CD8-positive, alpha-beta T cell (primary cell): ENCODE measurements at regions of chr12 and their contacts with region 1.

Region 1: DNA sequence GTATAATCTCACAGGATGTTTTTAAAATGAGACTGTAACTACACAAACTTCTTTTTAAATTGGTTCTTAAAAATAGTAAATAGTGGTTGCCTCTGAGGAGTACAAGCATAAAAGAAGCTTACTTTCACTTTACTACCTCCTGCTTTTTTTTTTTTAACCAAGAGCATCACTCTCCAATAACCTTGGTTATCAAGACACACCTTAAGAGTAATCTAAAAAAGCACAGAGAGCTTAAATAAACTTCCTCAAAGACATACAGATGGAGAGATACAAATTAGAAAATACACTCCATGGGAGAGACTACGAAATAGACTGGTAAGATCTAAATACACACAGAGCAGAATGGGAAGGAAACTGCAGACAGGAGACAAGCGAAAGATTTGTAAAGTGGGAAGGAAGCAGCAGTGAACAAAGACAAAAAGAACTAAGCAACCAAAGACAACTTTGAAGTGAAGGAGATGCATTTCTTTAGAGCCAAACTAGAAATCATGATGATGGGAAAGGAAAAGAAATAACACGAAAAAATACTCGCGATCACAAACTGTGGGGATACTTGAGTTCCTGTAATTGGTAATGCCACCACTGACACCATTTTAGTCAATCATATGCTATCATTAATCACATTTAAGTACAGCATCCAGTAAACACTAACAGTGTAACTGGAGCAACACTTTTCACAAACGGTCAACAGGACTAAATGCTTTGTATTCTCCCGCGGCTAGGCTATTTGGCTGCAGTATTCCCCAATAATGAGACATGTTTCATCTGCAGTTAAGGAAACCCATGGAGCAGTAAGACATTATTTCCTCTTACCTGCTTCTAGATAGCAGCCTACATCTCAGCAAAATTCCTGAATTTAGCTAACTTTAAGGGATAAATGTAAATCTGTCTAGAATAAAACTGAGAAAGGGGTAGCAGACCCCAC is 8.2 kb downstream of the SINHCAF start:
- DNase-seq: peak in 2 of 9 experiments; percentile 14 to 47
- ATAC-seq: peak; percentile 78
- H3K4me3 ChIP-seq: peak overlapping the region; percentile 36 to 45
- H3K4me3 Mint-ChIP-seq: peak overlapping the region; percentile 84
- H3K27ac ChIP-seq: peak overlapping the region; percentile 44 to 73
- H3K27ac Mint-ChIP-seq: peak overlapping the region; percentile 87
- H3K4me1 ChIP-seq: peaks cover 65% of the 10 kb centered on the region
- H3K4me1 Mint-ChIP-seq: peaks cover 75% of the 10 kb centered on the region
- H3K27me3 ChIP-seq: no peaks in the 10 kb centered on the region
- H3K27me3 Mint-ChIP-seq: no peaks in the 10 kb centered on the region
- CTCF ChIP-seq: no peak

Region 2: GRCh38 chr12:31201382-31201781 is 116.4 kb before region 1 on chr12:
- CTCF ChIA-PET with region 1: no interaction called
- POLR2A ChIA-PET with region 1: no interaction called
- intact Hi-C with region 1: no loop called
- DNase-seq: no peak
- ATAC-seq: no peak
- H3K4me3 ChIP-seq: no peak overlapping the region
- H3K4me3 Mint-ChIP-seq: no peak overlapping the region
- H3K27ac ChIP-seq: no peak overlapping the region
- H3K27ac Mint-ChIP-seq: no peak overlapping the region
- H3K4me1 ChIP-seq: no peaks in the 10 kb centered on the region
- H3K4me1 Mint-ChIP-seq: peaks cover 9% of the 10 kb centered on the region
- H3K27me3 ChIP-seq: no peaks in the 10 kb centered on the region
- H3K27me3 Mint-ChIP-seq: peaks cover 19% of the 10 kb centered on the region
- CTCF ChIP-seq: no peak

Region 3: DNA sequence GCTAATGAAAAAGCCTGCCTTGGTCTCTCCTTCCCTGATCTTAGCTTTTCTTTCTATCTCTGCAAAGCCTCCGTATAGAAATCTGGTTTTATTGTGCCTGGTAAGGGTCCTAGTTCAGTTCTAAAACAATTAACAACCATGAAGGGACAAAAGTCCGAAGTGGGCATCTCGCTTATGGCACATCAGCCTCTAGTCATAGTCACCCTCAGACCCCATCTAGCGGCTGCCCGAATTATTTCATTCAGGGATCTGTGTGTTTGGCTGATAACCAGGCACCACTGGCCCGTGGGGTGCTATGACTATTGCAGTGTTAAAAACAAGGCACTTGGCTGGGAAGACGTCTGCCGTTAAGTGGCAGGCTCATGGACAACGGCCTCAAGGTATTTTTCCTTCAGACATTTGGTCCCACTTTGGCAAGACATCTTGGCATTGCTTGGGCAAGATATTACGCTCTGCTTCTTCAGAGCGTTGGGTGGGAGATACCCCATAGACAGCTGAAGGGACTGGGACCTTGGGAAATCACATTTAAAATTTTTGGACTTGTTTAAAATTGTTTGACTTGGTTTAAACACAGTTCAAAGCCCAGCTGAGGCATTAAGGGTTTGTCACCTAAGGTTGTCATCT is 78.9 kb before region 1 on chr12:
- CTCF ChIA-PET with region 1: no interaction called
- POLR2A ChIA-PET with region 1: no interaction called
- intact Hi-C with region 1: no loop called
- DNase-seq: peak in 8 of 9 experiments; percentile 8 to 67 (median 50)
- ATAC-seq: peak; percentile 44
- H3K4me3 ChIP-seq: no peak overlapping the region
- H3K4me3 Mint-ChIP-seq: peak overlapping the region; percentile 26
- H3K27ac ChIP-seq: no peak overlapping the region
- H3K27ac Mint-ChIP-seq: no peak overlapping the region
- H3K4me1 ChIP-seq: no peaks in the 10 kb centered on the region
- H3K4me1 Mint-ChIP-seq: peaks cover 2% of the 10 kb centered on the region
- H3K27me3 ChIP-seq: peaks cover 0 to 3% of the 10 kb centered on the region in 2 experiments
- H3K27me3 Mint-ChIP-seq: peaks cover 25% of the 10 kb centered on the region
- CTCF ChIP-seq: peak; percentile 45

Region 4: DNA sequence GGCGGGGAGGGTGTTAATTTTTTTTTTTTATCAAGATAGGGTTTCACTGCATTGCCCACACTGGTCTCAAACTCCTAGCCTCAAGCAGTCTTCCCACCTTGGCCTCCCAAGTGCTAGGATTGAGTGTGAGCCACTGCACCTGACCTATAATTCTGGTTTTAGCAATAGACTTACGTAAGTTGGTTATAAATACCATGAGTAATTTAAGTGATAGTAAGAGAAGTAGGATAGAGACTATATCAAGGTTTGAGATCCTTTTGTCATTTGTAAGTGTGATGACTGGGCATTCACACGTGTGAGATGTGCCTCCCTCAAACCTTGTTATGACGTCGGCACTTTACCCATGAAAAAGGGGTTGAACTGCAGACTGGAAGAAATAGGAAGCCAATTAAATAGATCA is 14.3 kb before region 1 on chr12:
- CTCF ChIA-PET with region 1: no interaction called
- POLR2A ChIA-PET with region 1: interaction called, 3 read pairs
- intact Hi-C with region 1: loop called in 1 of 2 experiments (anchors 2 kb)
- DNase-seq: peak in 1 of 9 experiments; percentile 30
- ATAC-seq: no peak
- H3K4me3 ChIP-seq: no peak overlapping the region
- H3K4me3 Mint-ChIP-seq: no peak overlapping the region
- H3K27ac ChIP-seq: no peak overlapping the region
- H3K27ac Mint-ChIP-seq: no peak overlapping the region
- H3K4me1 ChIP-seq: peaks cover under 1% of the 10 kb centered on the region
- H3K4me1 Mint-ChIP-seq: peaks cover 68% of the 10 kb centered on the region
- H3K27me3 ChIP-seq: no peaks in the 10 kb centered on the region
- H3K27me3 Mint-ChIP-seq: no peaks in the 10 kb centered on the region
- CTCF ChIP-seq: no peak

Region 5: GRCh38 chr12:31362759-31363415 is 45.2 kb after region 1 on chr12:
- CTCF ChIA-PET with region 1: no interaction called
- POLR2A ChIA-PET with region 1: no interaction called
- intact Hi-C with region 1: loop called in 1 of 2 experiments (anchors 1 kb)
- DNase-seq: peak in 3 of 9 experiments; percentile 4 to 56 (median 35)
- ATAC-seq: peak; percentile 49
- H3K4me3 ChIP-seq: peak overlapping the region in 1 of 2 experiments; percentile 7
- H3K4me3 Mint-ChIP-seq: peak overlapping the region; percentile 52
- H3K27ac ChIP-seq: peak overlapping the region in 1 of 2 experiments; percentile 25
- H3K27ac Mint-ChIP-seq: peak overlapping the region; percentile 47
- H3K4me1 ChIP-seq: peaks cover 10% of the 10 kb centered on the region
- H3K4me1 Mint-ChIP-seq: peaks cover 17% of the 10 kb centered on the region
- H3K27me3 ChIP-seq: no peaks in the 10 kb centered on the region
- H3K27me3 Mint-ChIP-seq: no peaks in the 10 kb centered on the region
- CTCF ChIP-seq: no peak